SK-N-SH (cell line): ENCODE measurements at regions of chr1 and their contacts with region 1.

Region 1: GRCh38 chr1:95655321-95656020 is 421.5 kb downstream of the RWDD3 start:
- DNase-seq: peak; percentile 49
- H3K4me3 ChIP-seq: no peak overlapping the region
- H3K27ac ChIP-seq: peak overlapping the region; percentile 30 to 100; a peak in 3 of 4 replicates
- H3K4me1 ChIP-seq: peaks cover 0 to 29% of the 10 kb centered on the region in 2 experiments; a peak in 2 of 4 replicates
- H3K27me3 ChIP-seq: no peaks in the 10 kb centered on the region
- CTCF ChIP-seq: no peak
- EP300 ChIP-seq: peak in 1 of 2 experiments; percentile 97; a peak in 2 of 4 replicates
- RAD21 ChIP-seq: peak; percentile 39

Region 2: DNA sequence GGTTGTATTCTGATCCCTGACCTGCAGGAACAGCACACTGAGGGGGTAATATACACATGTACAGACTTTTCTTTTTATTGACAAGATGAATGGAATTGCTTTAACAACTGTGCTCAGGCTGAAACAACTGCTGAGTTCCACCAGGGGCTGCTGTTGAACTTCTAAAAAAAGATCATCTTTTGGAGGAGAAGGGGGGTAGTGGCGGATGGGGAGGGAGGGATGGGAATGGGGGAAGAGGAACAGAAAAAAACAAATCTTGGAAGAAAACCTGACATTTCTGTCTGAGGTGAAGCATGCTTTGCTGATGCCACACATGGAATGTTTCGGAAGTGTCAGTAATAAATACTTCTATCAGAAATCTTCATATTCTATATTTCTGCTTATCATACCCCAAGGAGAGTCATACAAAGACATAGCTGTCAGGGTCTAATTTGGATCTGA is 346.4 kb before region 1 on chr1:
- CTCF ChIA-PET with region 1: interaction called, 26 read pairs
- POLR2A ChIA-PET with region 1: interaction called, 9 read pairs
- DNase-seq: peak; percentile 73
- H3K4me3 ChIP-seq: peak overlapping the region in 1 of 2 experiments; percentile 41; a peak in 1 of 4 replicates
- H3K27ac ChIP-seq: peak overlapping the region in 1 of 2 experiments; percentile 100; a peak in 2 of 4 replicates
- H3K4me1 ChIP-seq: peaks cover 0 to 39% of the 10 kb centered on the region in 2 experiments; a peak in 2 of 4 replicates
- H3K27me3 ChIP-seq: no peaks in the 10 kb centered on the region; the same call in 1 of the 2 replicates
- CTCF ChIP-seq: peak; percentile 62
- EP300 ChIP-seq: peak in 1 of 2 experiments; percentile 37; a peak in 2 of 4 replicates
- RAD21 ChIP-seq: peak; percentile 91

Region 3: DNA sequence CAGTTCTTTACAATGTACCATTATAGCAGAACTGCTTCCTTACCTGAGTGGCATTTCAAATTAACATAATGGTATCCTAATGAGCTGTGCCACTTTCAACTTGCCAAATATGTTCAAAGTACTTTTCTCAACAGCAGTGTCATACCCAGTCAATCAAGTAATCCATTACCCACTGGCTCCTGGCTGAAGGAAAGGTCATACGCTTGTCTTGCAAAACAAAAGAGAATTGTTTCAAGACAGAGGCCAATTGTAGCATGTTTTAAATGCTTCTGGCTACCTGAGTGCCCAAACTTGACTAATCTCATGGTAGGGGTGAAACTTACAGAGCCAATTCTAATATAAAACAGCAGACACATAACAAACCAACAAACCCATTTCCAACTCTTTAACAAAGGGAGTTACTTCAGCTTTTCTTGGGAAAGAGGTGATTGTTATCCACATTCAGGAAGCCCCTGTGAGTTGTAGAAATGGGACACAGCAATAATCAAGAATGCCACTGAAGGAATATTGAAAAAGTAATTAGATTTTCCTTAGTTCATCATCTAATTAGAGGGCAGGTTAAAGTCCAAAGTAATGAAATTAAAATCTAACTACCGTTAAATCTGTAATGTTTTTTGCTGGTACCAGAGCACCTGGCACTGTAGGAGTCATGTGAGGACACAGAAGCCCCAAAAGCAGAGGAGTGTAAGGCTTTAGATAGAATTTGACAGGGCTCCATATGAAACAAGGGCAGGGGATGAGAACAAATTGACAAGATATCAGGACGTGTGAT is 179.6 kb before region 1 on chr1:
- CTCF ChIA-PET with region 1: no interaction called
- POLR2A ChIA-PET with region 1: no interaction called
- DNase-seq: no peak
- H3K4me3 ChIP-seq: no peak overlapping the region
- H3K27ac ChIP-seq: peak overlapping the region in 1 of 2 experiments; percentile 75; a peak in 2 of 4 replicates
- H3K4me1 ChIP-seq: no peaks in the 10 kb centered on the region; a peak in 1 of 4 replicates
- H3K27me3 ChIP-seq: no peaks in the 10 kb centered on the region
- CTCF ChIP-seq: no peak
- EP300 ChIP-seq: peak in 1 of 2 experiments; percentile 64; a peak in 1 of 4 replicates
- RAD21 ChIP-seq: no peak

Region 4: DNA sequence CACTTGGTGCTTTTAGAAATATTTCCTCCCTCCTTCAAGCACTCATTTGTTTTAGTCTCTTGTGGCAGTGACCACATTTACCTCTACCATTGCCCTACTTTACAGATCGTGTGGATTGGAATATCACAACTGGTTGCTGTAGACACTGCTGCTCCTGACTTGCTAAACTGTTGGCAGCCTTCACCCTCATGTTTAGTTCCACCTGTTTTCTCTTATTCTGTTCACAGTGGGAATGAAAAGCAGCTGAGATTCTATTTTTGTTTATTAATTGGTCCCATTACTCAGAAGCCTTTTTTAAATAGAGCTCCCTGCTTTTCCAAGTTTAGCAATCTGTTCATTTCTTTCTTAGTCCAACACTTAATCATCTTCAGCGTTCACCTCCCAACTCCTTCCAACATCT is 112.5 kb before region 1 on chr1:
- CTCF ChIA-PET with region 1: no interaction called
- POLR2A ChIA-PET with region 1: no interaction called
- DNase-seq: no peak
- H3K4me3 ChIP-seq: no peak overlapping the region
- H3K27ac ChIP-seq: no peak overlapping the region
- H3K4me1 ChIP-seq: no peaks in the 10 kb centered on the region
- H3K27me3 ChIP-seq: no peaks in the 10 kb centered on the region
- CTCF ChIP-seq: no peak
- EP300 ChIP-seq: no peak
- RAD21 ChIP-seq: no peak

Region 5: DNA sequence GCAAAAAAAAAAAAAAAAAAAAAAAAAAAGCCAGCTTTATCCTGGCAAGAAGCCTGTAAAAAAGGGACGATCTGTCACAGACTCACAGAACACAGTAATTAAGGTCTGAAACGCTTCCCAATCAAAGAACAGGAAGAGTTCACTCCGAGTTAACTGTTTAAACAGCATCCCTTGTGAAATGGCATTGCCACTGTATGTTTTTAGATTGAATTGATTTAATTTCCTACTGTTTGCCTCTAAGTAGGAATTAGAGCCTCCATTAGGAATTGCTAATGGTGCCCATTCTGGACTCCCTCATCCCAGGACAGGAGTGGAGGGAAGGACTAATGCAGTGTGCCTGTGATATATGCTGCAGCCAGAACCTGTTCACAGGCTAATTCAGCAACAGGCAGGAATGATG is 50.7 kb before region 1 on chr1:
- CTCF ChIA-PET with region 1: no interaction called
- POLR2A ChIA-PET with region 1: interaction called, 14 read pairs
- DNase-seq: peak; percentile 72
- H3K4me3 ChIP-seq: no peak overlapping the region
- H3K27ac ChIP-seq: peak overlapping the region; percentile 33 to 100; a peak in 3 of 4 replicates
- H3K4me1 ChIP-seq: peaks cover 0 to 19% of the 10 kb centered on the region in 2 experiments; a peak in 2 of 4 replicates
- H3K27me3 ChIP-seq: no peaks in the 10 kb centered on the region
- CTCF ChIP-seq: no peak
- EP300 ChIP-seq: peak in 1 of 2 experiments; percentile 97; a peak in 2 of 4 replicates
- RAD21 ChIP-seq: peak; percentile 57

Region 6: GRCh38 chr1:95615421-95615820 is 40.0 kb before region 1 on chr1:
- CTCF ChIA-PET with region 1: no interaction called
- POLR2A ChIA-PET with region 1: no interaction called
- DNase-seq: no peak
- H3K4me3 ChIP-seq: no peak overlapping the region
- H3K27ac ChIP-seq: no peak overlapping the region
- H3K4me1 ChIP-seq: no peaks in the 10 kb centered on the region; a peak in 1 of 4 replicates
- H3K27me3 ChIP-seq: no peaks in the 10 kb centered on the region
- CTCF ChIP-seq: no peak
- EP300 ChIP-seq: no peak
- RAD21 ChIP-seq: no peak

Region 7: GRCh38 chr1:95640746-95641145 is 14.7 kb before region 1 on chr1:
- CTCF ChIA-PET with region 1: interaction called, 6 read pairs
- POLR2A ChIA-PET with region 1: interaction called, 29 read pairs
- DNase-seq: peak; percentile 27
- H3K4me3 ChIP-seq: no peak overlapping the region
- H3K27ac ChIP-seq: peak overlapping the region; percentile 27 to 100; a peak in 3 of 4 replicates
- H3K4me1 ChIP-seq: peaks cover 0 to 49% of the 10 kb centered on the region in 2 experiments; a peak in 2 of 4 replicates
- H3K27me3 ChIP-seq: no peaks in the 10 kb centered on the region
- CTCF ChIP-seq: no peak
- EP300 ChIP-seq: peak in 1 of 2 experiments; percentile 75; a peak in 2 of 4 replicates
- RAD21 ChIP-seq: peak; percentile 41

Region 8: GRCh38 chr1:95905818-95906395 is 250.4 kb after region 1 on chr1:
- CTCF ChIA-PET with region 1: interaction called, 8 read pairs
- POLR2A ChIA-PET with region 1: interaction called, 35 read pairs
- DNase-seq: peak; percentile 30
- H3K4me3 ChIP-seq: no peak overlapping the region
- H3K27ac ChIP-seq: peak overlapping the region; percentile 31 to 100; a peak in 3 of 4 replicates
- H3K4me1 ChIP-seq: peaks cover 0 to 13% of the 10 kb centered on the region in 2 experiments; a peak in 2 of 4 replicates
- H3K27me3 ChIP-seq: no peaks in the 10 kb centered on the region
- CTCF ChIP-seq: no peak
- EP300 ChIP-seq: peak; percentile 49 to 100
- RAD21 ChIP-seq: peak; percentile 36